Sigmoid colon (tissue), 7 donors: ENCODE measurements at regions of chr12 and their contacts with region 1.

Region 1: GRCh38 chr12:109428037-109428629 is 49.0 kb downstream of the KCTD10 start:
- DNase-seq: peak; percentile 91
- H3K4me3 ChIP-seq: no peak overlapping the region
- H3K27ac ChIP-seq: no peak overlapping the region
- H3K4me1 ChIP-seq: peaks cover 0 to 7% (median 5%) of the 10 kb centered on the region in 4 donors
- H3K27me3 ChIP-seq: no peaks in the 10 kb centered on the region
- CTCF ChIP-seq: peak; percentile 76 to 98 (median 88)
- EP300 ChIP-seq: no peak
- POLR2A ChIP-seq: no peak

Region 2: GRCh38 chr12:109126784-109127183 is 301.3 kb before region 1 on chr12:
- intact Hi-C with region 1: no loop called
- DNase-seq: peak; percentile 57
- H3K4me3 ChIP-seq: no peak overlapping the region
- H3K27ac ChIP-seq: peak overlapping the region; percentile 50 to 83 (median 80)
- H3K4me1 ChIP-seq: peaks cover 0 to 55% (median 45%) of the 10 kb centered on the region in 4 donors
- H3K27me3 ChIP-seq: no peaks in the 10 kb centered on the region
- CTCF ChIP-seq: no peak
- EP300 ChIP-seq: no peak
- POLR2A ChIP-seq: no peak

Region 3: GRCh38 chr12:109477185-109477962 is 49.2 kb after region 1 on chr12 and contains the starts of genes KCTD10 and UBE3B:
- intact Hi-C with region 1: loop called (anchors 1 kb)
- DNase-seq: peak; percentile 94
- H3K4me3 ChIP-seq: peak within 1 kb of the TSS; percentile 63 to 90 (median 87)
- H3K27ac ChIP-seq: peak within 1 kb of the TSS; percentile 95 to 98 (median 97)
- H3K4me1 ChIP-seq: peaks cover 0 to 61% (median 57%) of the 10 kb centered on the region in 4 donors
- H3K27me3 ChIP-seq: no peaks in the 10 kb centered on the region
- CTCF ChIP-seq: peak; percentile 13 to 35 (median 24)
- EP300 ChIP-seq: no peak
- POLR2A ChIP-seq: peak; percentile 37 to 67
- total RNA-seq, gene KCTD10: 82.8 to 123 (median 101) TPM
- total RNA-seq, gene UBE3B: 48.4 to 67.7 (median 56.2) TPM